MCF 10A (cell line): ENCODE measurements at regions of chr2 and their contacts with region 1.

Region 1: DNA sequence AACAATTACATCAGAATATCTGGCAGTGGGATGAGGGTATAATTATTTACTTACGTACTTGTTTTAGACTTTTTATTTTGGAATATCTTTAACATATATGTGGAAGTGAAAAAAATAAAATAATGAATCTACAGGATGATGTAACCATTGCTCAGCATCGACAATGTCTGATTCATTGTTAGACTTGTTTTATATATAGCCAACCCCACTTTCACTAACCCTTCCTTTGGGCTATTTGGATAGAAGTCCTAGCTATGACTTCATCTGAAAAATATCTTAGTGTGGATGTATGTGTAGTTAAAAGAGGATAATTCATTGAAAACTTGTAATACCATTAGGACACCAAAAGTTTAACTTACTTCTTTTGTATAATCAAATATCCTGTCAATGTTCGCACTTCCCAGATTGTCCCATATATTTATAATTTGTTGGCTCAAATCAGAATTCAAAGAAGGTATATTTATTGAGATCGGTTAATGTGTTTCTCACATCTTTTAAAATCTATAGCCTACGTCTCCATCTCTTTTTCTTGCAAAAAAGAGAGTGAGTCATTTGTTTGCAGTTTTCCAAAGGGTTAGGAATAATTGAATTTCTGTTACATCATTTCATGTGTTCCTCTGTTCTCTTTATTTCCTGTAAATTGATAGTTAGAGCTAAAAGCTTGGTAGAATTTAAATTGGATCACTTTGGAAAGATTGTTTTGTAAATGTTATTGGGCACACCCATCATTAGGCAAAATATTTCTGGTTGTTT is 506.1 kb upstream of the FAM98A start:
- DNase-seq: peak; percentile 69
- H3K4me3 Mint-ChIP-seq: peak overlapping the region; percentile 45
- H3K27ac Mint-ChIP-seq: peak overlapping the region; percentile 82
- H3K4me1 Mint-ChIP-seq: peaks cover 25% of the 10 kb centered on the region
- H3K27me3 Mint-ChIP-seq: no peaks in the 10 kb centered on the region
- CTCF ChIP-seq: no peak

Region 2: DNA sequence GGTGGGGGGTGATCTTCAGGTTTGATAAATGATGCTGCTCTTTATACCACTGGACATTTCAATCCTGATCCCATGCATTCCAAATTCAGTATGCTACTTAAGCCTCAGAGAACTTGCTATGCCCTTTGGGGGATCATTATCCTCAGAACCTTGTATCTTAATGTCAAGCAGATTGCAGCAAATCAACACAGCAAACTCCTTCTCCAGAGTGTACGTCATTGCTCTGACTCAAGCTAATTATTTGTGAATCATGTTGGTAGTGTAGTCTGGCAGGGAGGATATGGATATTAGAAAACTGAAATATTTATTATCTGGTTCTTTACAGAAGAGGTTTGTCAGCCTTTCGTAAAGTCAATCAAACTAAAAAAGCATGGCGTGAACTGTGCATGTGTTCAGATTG is 56.4 kb after region 1 on chr2:
- CTCF ChIA-PET with region 1: no interaction called
- POLR2A ChIA-PET with region 1: no interaction called
- intact Hi-C with region 1: no loop called
- DNase-seq: no peak
- H3K4me3 Mint-ChIP-seq: no peak overlapping the region
- H3K27ac Mint-ChIP-seq: no peak overlapping the region
- H3K4me1 Mint-ChIP-seq: peaks cover 6% of the 10 kb centered on the region
- H3K27me3 Mint-ChIP-seq: no peaks in the 10 kb centered on the region
- CTCF ChIP-seq: no peak

Region 3: DNA sequence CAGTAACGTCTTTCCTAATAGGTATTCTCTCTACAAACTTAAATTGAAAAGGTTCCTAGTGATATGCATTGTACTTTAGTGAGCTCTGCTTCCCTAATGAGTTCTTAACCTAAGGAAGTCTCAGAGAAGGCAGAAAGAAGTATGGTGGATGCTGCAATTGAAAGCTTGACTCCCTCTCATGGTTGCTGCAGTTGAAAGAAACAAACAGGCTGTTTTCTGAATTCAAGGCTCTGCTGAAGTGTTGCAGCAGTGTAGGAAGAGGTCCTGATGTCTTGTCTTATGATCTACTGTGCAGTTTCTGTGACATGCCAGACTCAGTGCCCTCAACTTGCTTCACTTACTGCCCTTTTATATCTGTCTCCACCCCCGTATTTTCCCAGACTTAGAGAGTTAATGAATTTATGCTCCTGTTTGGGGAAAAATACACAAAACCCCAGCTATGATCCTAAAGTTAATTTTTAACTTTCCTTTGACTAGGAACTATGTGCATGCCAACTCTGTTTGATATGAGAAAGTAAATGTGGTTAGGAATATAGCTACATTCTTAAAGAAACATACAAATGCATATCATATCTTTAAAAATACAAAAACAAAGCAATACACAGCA is 149.2 kb after region 1 on chr2:
- CTCF ChIA-PET with region 1: no interaction called
- POLR2A ChIA-PET with region 1: no interaction called
- intact Hi-C with region 1: no loop called
- DNase-seq: no peak
- H3K4me3 Mint-ChIP-seq: no peak overlapping the region
- H3K27ac Mint-ChIP-seq: no peak overlapping the region
- H3K4me1 Mint-ChIP-seq: no peaks in the 10 kb centered on the region
- H3K27me3 Mint-ChIP-seq: no peaks in the 10 kb centered on the region
- CTCF ChIP-seq: no peak

Region 4: DNA sequence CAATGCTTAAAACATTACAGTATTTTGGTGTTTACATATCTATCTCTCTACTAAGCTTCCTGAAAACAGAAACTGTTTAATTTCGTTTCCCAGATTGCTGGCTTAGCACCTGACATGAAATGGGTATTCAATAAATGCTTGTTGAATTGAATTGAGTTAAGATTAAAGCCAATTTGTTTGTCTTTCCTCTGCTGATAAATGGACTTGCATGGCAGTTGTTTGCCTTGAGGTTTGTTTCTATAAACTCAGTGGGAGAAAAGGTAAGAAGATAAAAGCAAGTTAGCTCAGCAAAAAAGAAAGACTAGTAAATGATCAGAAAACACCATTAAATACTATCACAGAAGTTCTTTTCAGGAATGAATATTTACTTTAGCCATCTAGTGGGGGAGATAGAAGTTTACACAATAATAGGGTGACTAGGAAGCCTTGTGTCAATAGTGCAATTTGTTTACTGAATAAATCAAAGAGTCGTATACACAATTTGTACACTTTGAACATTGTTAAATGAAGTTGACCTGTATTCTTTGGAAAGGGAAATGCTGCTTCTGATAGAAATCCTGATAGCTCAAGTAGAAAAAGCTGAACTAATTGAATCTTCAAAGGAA is 248.4 kb after region 1 on chr2:
- CTCF ChIA-PET with region 1: no interaction called
- POLR2A ChIA-PET with region 1: no interaction called
- intact Hi-C with region 1: loop called (anchors 10 kb)
- DNase-seq: no peak
- H3K4me3 Mint-ChIP-seq: no peak overlapping the region
- H3K27ac Mint-ChIP-seq: no peak overlapping the region
- H3K4me1 Mint-ChIP-seq: peaks cover 4% of the 10 kb centered on the region
- H3K27me3 Mint-ChIP-seq: no peaks in the 10 kb centered on the region
- CTCF ChIP-seq: no peak

Region 5: GRCh38 chr2:34419856-34420255 is 314.7 kb after region 1 on chr2:
- CTCF ChIA-PET with region 1: no interaction called
- POLR2A ChIA-PET with region 1: no interaction called
- intact Hi-C with region 1: loop called (anchors 10 kb)
- DNase-seq: no peak
- H3K4me3 Mint-ChIP-seq: no peak overlapping the region
- H3K27ac Mint-ChIP-seq: peak overlapping the region; percentile 49
- H3K4me1 Mint-ChIP-seq: peaks cover 23% of the 10 kb centered on the region
- H3K27me3 Mint-ChIP-seq: no peaks in the 10 kb centered on the region
- CTCF ChIP-seq: no peak

Region 6: DNA sequence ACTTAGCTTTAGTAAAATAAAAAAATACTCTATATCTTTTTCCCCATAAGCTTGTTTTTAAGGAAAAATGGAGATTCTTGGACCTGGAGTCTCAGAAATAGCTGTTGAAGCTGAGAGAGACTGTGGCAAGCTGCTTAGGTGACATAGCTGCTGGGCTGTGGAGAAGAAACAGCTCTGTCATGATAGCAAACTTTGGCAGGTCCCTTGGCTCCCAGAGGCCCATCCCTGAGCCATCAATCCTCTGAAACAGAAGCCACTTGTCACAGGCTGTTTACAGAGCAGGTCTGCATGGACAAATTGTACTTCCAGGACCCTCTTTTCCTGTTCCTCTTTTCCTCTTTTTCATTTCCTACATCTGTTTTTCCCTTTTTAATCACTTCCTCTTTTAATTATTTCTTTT is 880.3 kb after region 1 on chr2:
- CTCF ChIA-PET with region 1: no interaction called
- POLR2A ChIA-PET with region 1: no interaction called
- intact Hi-C with region 1: no loop called
- DNase-seq: no peak
- H3K4me3 Mint-ChIP-seq: no peak overlapping the region
- H3K27ac Mint-ChIP-seq: no peak overlapping the region
- H3K4me1 Mint-ChIP-seq: no peaks in the 10 kb centered on the region
- H3K27me3 Mint-ChIP-seq: peaks cover 84% of the 10 kb centered on the region
- CTCF ChIP-seq: no peak